Naive thymus-derived CD4-positive, alpha-beta T cell (primary cell): ENCODE measurements at regions of chr7 and their contacts with region 1.

Region 1: DNA sequence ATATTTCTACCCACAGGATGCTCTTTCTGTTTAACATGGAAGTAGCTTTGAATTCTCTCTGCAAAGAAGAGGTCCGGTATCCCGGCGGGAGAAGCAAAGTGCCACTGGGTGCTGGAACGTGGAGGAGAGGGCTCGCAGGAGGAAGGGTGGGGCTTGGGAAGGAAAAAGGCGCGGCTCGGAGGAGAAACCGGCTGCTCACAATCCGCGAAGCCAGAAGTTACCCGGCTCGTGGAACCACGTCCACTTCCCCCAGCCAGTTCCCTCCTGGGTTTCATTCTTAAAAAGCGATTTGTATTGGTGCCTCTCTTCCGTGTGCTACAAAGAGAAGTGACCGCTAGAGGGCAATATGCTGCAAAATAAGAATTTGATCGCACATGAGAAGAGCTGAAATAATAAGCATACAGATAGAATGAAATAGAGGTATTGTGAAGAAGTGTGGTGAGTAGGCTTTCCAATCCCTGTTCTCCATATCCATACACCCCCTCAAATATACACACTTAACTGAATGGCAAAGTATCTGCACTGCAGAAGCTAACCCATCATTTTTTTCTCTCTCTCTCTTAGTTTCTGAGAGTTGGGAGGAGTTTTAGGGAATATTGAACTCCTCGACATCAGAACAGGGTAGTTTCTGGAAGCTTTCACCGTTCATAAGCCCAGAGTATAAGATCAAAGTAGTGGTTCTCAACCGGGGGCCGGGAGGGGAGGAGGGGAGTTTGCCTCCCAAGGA is 31.1 kb downstream of the TRIL start:
- DNase-seq: peak; percentile 16 to 72 (median 60)
- ATAC-seq: peak; percentile 93
- H3K4me3 ChIP-seq: peak overlapping the region; percentile 57
- H3K4me3 Mint-ChIP-seq: peak overlapping the region; percentile 79 to 97 (median 90)
- H3K27ac ChIP-seq: no peak overlapping the region
- H3K27ac Mint-ChIP-seq: peak overlapping the region in 8 of 9 donors; percentile 9 to 92 (median 53)
- H3K4me1 ChIP-seq: peaks cover 4 to 12% of the 10 kb centered on the region in 2 donors
- H3K4me1 Mint-ChIP-seq: peaks cover 0 to 36% (median 23%) of the 10 kb centered on the region in 7 donors
- H3K27me3 ChIP-seq: no peaks in the 10 kb centered on the region
- H3K27me3 Mint-ChIP-seq: peaks cover 3 to 29% (median 7%) of the 10 kb centered on the region in 5 donors

Region 2: GRCh38 chr7:28980451-28980891 is 53.4 kb after region 1 on chr7:
- CTCF ChIA-PET with region 1: no interaction called
- POLR2A ChIA-PET with region 1: no interaction called
- intact Hi-C with region 1: no loop called
- DNase-seq: no peak
- ATAC-seq: no peak
- H3K4me3 ChIP-seq: no peak overlapping the region
- H3K4me3 Mint-ChIP-seq: no peak overlapping the region
- H3K27ac ChIP-seq: no peak overlapping the region
- H3K27ac Mint-ChIP-seq: no peak overlapping the region
- H3K4me1 ChIP-seq: no peaks in the 10 kb centered on the region
- H3K4me1 Mint-ChIP-seq: no peaks in the 10 kb centered on the region
- H3K27me3 ChIP-seq: no peaks in the 10 kb centered on the region
- H3K27me3 Mint-ChIP-seq: peaks cover 0 to 27% (median 24%) of the 10 kb centered on the region in 5 donors

Region 3: GRCh38 chr7:29099891-29100847 is 173.1 kb after region 1 on chr7:
- CTCF ChIA-PET with region 1: interaction called, 38 read pairs
- POLR2A ChIA-PET with region 1: no interaction called
- intact Hi-C with region 1: loop called (anchors 1 kb)
- DNase-seq: no peak
- ATAC-seq: no peak
- H3K4me3 ChIP-seq: no peak overlapping the region
- H3K4me3 Mint-ChIP-seq: no peak overlapping the region
- H3K27ac ChIP-seq: no peak overlapping the region
- H3K27ac Mint-ChIP-seq: no peak overlapping the region
- H3K4me1 ChIP-seq: no peaks in the 10 kb centered on the region
- H3K4me1 Mint-ChIP-seq: peaks cover 0 to 5% (median 3%) of the 10 kb centered on the region in 7 donors
- H3K27me3 ChIP-seq: no peaks in the 10 kb centered on the region
- H3K27me3 Mint-ChIP-seq: peaks cover 0 to 6% (median 0%) of the 10 kb centered on the region in 5 donors

Region 4: DNA sequence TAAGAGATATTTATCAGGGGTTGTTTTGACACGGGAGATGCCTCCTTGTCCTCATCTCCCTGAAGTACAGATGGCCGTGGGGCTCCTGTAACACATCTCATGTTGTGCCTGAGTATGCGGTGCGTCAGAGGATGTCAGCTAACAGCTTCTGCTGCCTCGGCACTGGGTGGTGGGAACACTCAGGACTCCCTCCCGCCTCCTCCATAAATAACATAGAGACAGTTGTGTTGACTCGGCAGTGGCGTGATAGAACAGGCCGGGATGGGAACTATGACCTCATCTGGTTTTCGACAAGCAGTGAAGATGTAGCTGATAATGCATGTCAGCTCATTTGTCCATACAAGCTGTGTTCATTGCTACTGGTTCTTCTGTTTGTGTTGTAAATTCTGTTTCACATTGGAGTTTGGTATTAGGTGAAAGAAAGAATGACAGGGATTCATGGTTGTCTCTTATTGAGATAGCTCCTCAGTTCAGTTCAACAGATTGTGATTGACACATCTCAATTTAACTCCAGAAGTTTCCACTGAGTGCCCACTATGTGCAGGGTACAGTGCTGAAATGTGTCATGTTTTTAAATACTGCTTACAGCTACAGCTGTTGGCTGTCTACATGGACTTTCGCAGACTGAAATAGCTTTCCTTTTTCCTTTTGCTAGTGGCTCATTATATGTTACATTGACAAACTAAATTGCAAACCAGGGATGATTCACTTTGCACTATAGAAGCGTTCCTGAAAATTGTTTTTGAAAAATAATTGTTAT is 354.9 kb after region 1 on chr7:
- CTCF ChIA-PET with region 1: no interaction called
- POLR2A ChIA-PET with region 1: no interaction called
- intact Hi-C with region 1: no loop called
- DNase-seq: no peak
- ATAC-seq: no peak
- H3K4me3 ChIP-seq: no peak overlapping the region
- H3K4me3 Mint-ChIP-seq: no peak overlapping the region
- H3K27ac ChIP-seq: no peak overlapping the region
- H3K27ac Mint-ChIP-seq: no peak overlapping the region
- H3K4me1 ChIP-seq: peaks cover 0 to 15% of the 10 kb centered on the region in 2 donors
- H3K4me1 Mint-ChIP-seq: peaks cover 0 to 18% (median 0%) of the 10 kb centered on the region in 7 donors
- H3K27me3 ChIP-seq: no peaks in the 10 kb centered on the region
- H3K27me3 Mint-ChIP-seq: peaks cover 0 to 44% (median 6%) of the 10 kb centered on the region in 5 donors